Panc1 (cell line): ENCODE measurements at regions of chr16 and their contacts with region 1.

Region 1: DNA sequence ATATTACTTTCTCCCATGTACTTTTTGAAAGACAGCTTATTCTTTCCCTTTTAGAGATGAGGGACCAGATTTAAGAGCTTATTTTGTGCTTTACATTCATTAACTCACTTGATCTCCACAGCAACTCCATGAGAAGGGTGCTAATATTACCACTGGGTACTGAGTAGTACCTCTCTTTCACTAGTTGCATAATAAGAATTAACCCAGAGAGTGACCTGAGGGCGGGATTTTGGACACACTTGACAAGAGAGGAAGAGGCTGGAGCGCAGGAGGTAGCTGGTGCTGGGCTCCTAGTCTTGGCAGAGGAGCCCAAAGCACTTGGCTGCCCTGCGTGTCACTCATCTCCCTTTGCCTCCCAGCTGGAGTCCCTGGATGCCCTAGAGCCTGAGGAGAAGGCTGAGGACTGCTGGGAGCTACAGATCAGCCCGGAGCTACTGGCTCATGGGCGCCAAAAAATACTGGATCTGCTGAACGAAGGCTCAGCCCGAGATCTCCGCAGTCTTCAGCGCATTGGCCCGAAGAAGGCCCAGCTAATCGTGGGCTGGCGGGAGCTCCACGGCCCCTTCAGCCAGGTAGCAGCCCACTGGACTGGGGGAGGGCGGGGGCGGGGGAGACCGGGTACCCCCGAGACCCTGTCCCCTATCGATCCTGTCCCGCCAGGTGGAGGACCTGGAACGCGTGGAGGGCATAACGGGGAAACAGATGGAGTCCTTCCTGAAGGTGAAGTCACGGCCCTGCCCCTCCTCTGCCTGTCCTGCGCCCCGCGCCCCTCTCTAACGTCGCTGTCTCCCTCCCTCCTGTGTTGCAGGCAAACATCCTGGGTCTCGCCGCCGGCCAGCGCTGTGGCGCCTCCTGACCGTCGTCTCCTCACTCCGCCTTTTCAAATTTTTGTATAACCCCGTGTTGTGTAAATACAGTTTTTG is 1.6 kb upstream of the MAZ start:
- DNase-seq: no peak
- ATAC-seq: peak; percentile 19
- H3K4me3 ChIP-seq: peak overlapping the region; percentile 57 to 69
- H3K27ac ChIP-seq: peak overlapping the region; percentile 97
- H3K4me1 ChIP-seq: peaks cover 24% of the 10 kb centered on the region
- H3K27me3 ChIP-seq: no peaks in the 10 kb centered on the region
- CTCF ChIP-seq: no peak

Region 2: GRCh38 chr16:29789775-29790182 is 14.9 kb before region 1 on chr16:
- CTCF ChIA-PET with region 1: no interaction called
- POLR2A ChIA-PET with region 1: interaction called, 14 read pairs
- in situ Hi-C with region 1: no loop called
- intact Hi-C with region 1: no loop called
- DNase-seq: no peak
- ATAC-seq: peak; percentile 17; the same call in 1 of the 2 replicates
- H3K4me3 ChIP-seq: peak overlapping the region; percentile 88 to 93
- H3K27ac ChIP-seq: peak overlapping the region; percentile 97
- H3K4me1 ChIP-seq: peaks cover 12% of the 10 kb centered on the region
- H3K27me3 ChIP-seq: no peaks in the 10 kb centered on the region
- CTCF ChIP-seq: no peak

Region 3: GRCh38 chr16:29900102-29900887 is 95.6 kb after region 1 on chr16 and contains the start of gene ASPHD1:
- CTCF ChIA-PET with region 1: no interaction called
- POLR2A ChIA-PET with region 1: no interaction called
- in situ Hi-C with region 1: no loop called
- intact Hi-C with region 1: no loop called
- DNase-seq: peak; percentile 57
- ATAC-seq: peak; percentile 84
- H3K4me3 ChIP-seq: peak within 1 kb of the TSS; percentile 48 to 71
- H3K27ac ChIP-seq: peak within 1 kb of the TSS; percentile 70
- H3K4me1 ChIP-seq: peaks cover 5% of the 10 kb centered on the region; the same call in 1 of the 2 replicates
- H3K27me3 ChIP-seq: no peaks in the 10 kb centered on the region
- CTCF ChIP-seq: no peak
- total RNA-seq, gene ASPHD1: 87.0 TPM